ENCODE measurements at regions of chr12 and their contacts with region 1.

Region 1: GRCh38 chr12:62435303-62436163 is 31.1 kb upstream of the MON2 start:
- DNase-seq: peak; percentile 20
- ATAC-seq: peak; percentile 69
- H3K4me3 Mint-ChIP-seq: peak overlapping the region; percentile 79
- H3K27ac Mint-ChIP-seq: no peak overlapping the region
- H3K4me1 Mint-ChIP-seq: peaks cover 17% of the 10 kb centered on the region
- H3K27me3 Mint-ChIP-seq: peaks cover 15% of the 10 kb centered on the region
- CTCF ChIP-seq: no peak

Region 2: GRCh38 chr12:62466594-62467491 is 31.3 kb after region 1 on chr12 and contains the start of gene MON2:
- CTCF ChIA-PET with region 1: interaction called, 4 read pairs
- POLR2A ChIA-PET with region 1: no interaction called
- intact Hi-C with region 1: loop called (anchors 1 kb)
- DNase-seq: peak; percentile 85
- ATAC-seq: peak; percentile 96
- H3K4me3 Mint-ChIP-seq: peak within 1 kb of the TSS; percentile 84
- H3K27ac Mint-ChIP-seq: peak within 1 kb of the TSS; percentile 84
- H3K4me1 Mint-ChIP-seq: peaks cover 28% of the 10 kb centered on the region
- H3K27me3 Mint-ChIP-seq: no peaks in the 10 kb centered on the region
- CTCF ChIP-seq: no peak
- total RNA-seq, gene MON2: 51.6 and 69.9 TPM in 2 replicates

Region 3: GRCh38 chr12:62793256-62794217 is 358.0 kb after region 1 on chr12:
- CTCF ChIA-PET with region 1: interaction called, 110 read pairs
- POLR2A ChIA-PET with region 1: no interaction called
- intact Hi-C with region 1: loop called (anchors 1 kb)
- DNase-seq: peak; percentile 67
- ATAC-seq: peak; percentile 82
- H3K4me3 Mint-ChIP-seq: no peak overlapping the region
- H3K27ac Mint-ChIP-seq: no peak overlapping the region
- H3K4me1 Mint-ChIP-seq: no peaks in the 10 kb centered on the region
- H3K27me3 Mint-ChIP-seq: no peaks in the 10 kb centered on the region
- CTCF ChIP-seq: peak; percentile 93

Region 4: DNA sequence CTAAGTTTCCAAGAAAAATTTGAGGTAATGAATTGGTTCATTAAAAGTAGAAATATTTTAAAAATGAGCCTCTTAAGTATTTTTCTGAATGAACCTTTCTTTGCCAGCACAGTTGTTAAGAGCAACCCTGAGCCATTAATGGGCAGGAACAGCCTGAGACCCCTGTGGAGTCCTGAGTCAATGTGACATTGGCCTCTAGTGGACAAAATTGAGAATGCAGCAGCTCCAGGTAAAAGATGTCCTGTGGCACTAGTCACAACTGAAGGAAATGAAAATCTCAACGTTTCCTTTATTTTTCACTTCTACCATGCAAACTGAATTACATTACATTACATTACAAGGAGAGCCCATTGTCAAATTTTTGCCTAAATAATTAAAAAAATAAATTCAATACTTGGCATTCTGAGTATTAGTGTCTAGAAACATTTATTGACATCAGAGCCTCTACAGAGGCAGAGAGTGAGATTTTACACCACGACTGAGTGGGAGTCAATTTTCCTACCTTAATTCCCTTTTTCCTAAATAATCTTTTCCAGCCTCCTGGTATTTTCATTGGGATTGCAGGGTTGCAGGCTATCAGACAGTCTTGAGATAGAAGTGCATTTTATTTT is 363.7 kb after region 1 on chr12:
- CTCF ChIA-PET with region 1: interaction called, 110 read pairs
- POLR2A ChIA-PET with region 1: no interaction called
- intact Hi-C with region 1: loop called (anchors 1 kb)
- DNase-seq: no peak
- ATAC-seq: peak; percentile 93
- H3K4me3 Mint-ChIP-seq: no peak overlapping the region
- H3K27ac Mint-ChIP-seq: no peak overlapping the region
- H3K4me1 Mint-ChIP-seq: peaks cover 3% of the 10 kb centered on the region
- H3K27me3 Mint-ChIP-seq: peaks cover 2% of the 10 kb centered on the region
- CTCF ChIP-seq: peak; percentile 75

Region 5: DNA sequence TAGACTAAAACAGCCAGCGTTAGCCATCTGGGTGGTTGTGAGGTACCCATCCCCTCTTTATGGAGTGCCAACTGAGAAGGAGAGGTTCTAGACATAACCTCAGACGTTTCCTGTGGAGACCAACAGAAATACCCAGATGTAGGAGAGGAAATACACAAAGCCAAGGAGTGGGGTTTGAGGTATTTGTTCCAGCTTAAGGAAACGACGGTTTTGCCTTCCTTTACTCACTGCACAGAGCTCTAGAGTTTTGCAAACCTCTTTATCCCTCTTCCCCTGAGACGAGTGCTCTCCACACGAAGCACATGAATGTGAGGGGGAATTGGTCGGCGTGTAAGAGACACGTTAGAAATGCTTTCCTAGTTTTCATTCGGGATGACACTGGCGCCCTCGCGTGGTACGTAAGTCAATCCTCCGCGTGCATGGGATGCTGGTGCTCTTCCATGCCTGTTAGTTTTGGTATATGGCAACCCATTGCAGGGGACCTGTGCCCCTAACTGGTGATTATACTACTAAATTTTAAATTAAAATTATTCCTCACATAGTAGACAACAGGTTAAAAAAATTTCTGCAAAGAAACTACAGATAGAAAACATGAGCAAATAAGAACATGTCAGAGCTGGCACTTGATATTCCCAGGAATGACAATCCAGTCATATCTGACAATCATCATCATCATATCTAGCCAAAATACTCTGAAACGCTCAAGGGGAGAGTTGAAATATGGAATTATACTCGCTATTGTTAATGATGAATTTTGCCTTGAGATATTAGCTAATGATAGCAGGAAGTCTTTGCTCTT is 377.7 kb after region 1 on chr12:
- CTCF ChIA-PET with region 1: interaction called, 29 read pairs
- POLR2A ChIA-PET with region 1: no interaction called
- intact Hi-C with region 1: loop called (anchors 1 kb)
- DNase-seq: no peak
- ATAC-seq: peak; percentile 42
- H3K4me3 Mint-ChIP-seq: peak overlapping the region; percentile 66
- H3K27ac Mint-ChIP-seq: no peak overlapping the region
- H3K4me1 Mint-ChIP-seq: peaks cover 6% of the 10 kb centered on the region
- H3K27me3 Mint-ChIP-seq: peaks cover 3% of the 10 kb centered on the region
- CTCF ChIP-seq: no peak